Mammary epithelial cell (primary cell): ENCODE measurements at regions of chr11 and their contacts with region 1.

Region 1: DNA sequence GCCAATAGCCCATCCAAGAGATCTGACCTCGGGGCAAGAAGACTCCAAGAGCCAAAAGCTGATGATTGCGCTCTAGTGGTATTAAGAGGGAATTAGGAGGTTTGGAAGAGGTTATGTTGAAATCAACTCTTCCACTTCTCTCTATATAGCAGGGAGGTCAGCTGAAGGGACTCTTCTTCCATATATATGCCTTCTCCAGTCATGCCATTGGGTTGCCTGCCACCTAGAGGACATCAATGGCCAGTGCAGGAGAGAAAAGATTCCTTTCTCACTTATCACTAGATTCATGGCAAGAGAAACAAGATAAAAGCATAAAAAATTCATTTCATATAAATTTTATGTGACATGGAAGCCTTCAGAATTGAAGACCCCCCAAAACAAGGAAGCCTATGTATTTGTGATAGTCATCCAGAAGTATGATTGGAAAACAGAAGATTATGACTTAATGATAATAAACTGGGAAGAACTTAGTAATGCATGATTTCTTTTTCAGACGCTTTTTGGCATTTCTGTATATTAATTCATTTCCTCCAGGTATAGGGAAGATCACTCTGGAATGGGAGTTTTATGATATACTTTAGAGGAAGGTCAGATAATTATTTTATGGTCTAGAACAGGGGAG is 435.1 kb upstream of the DDI1 start:
- DNase-seq: peak; percentile 52
- H3K4me3 ChIP-seq: no peak overlapping the region
- H3K27ac ChIP-seq: no peak overlapping the region
- H3K4me1 ChIP-seq: no peaks in the 10 kb centered on the region
- H3K27me3 ChIP-seq: no peaks in the 10 kb centered on the region
- CTCF ChIP-seq: peak; percentile 96 to 99

Region 2: GRCh38 chr11:103202048-103202651 is 399.2 kb before region 1 on chr11:
- CTCF ChIA-PET with region 1: no interaction called
- dilution Hi-C with region 1: no loop called
- in situ Hi-C with region 1: no loop called
- intact Hi-C with region 1: loop called (anchors 1 kb)
- DNase-seq: peak; percentile 17
- H3K4me3 ChIP-seq: no peak overlapping the region
- H3K27ac ChIP-seq: no peak overlapping the region
- H3K4me1 ChIP-seq: no peaks in the 10 kb centered on the region
- H3K27me3 ChIP-seq: no peaks in the 10 kb centered on the region
- CTCF ChIP-seq: peak; percentile 70 to 86

Region 3: DNA sequence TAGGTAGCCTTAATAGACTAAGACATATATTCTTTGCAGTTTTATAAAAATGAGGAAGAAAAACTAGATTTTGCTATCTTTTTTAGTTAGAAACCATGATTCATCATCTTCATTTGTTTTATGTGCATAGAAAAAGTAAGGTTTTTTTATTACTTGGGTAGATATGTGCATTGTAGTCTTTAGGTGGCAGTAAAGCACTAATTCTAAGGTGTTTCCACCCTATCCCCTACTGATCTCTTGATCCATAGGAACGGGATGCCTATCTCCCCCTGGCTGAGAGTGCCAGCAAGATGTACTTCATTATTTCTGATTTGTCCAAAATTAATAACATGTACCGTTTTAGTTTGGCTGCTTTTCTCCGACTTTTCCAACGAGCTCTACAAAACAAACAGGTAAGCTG is 344.0 kb before region 1 on chr11:
- CTCF ChIA-PET with region 1: no interaction called
- dilution Hi-C with region 1: no loop called
- in situ Hi-C with region 1: no loop called
- intact Hi-C with region 1: loop called (anchors 1 kb)
- DNase-seq: no peak
- H3K4me3 ChIP-seq: no peak overlapping the region
- H3K27ac ChIP-seq: no peak overlapping the region
- H3K4me1 ChIP-seq: no peaks in the 10 kb centered on the region
- H3K27me3 ChIP-seq: no peaks in the 10 kb centered on the region
- CTCF ChIP-seq: peak; percentile 29 to 42

Region 4: GRCh38 chr11:103326070-103326794 is 275.1 kb before region 1 on chr11:
- CTCF ChIA-PET with region 1: no interaction called
- dilution Hi-C with region 1: no loop called
- in situ Hi-C with region 1: loop called (anchors 10 kb)
- intact Hi-C with region 1: loop called (anchors 1 kb)
- DNase-seq: peak; percentile 51
- H3K4me3 ChIP-seq: no peak overlapping the region
- H3K27ac ChIP-seq: no peak overlapping the region
- H3K4me1 ChIP-seq: no peaks in the 10 kb centered on the region
- H3K27me3 ChIP-seq: no peaks in the 10 kb centered on the region
- CTCF ChIP-seq: peak; percentile 79 to 89

Region 5: DNA sequence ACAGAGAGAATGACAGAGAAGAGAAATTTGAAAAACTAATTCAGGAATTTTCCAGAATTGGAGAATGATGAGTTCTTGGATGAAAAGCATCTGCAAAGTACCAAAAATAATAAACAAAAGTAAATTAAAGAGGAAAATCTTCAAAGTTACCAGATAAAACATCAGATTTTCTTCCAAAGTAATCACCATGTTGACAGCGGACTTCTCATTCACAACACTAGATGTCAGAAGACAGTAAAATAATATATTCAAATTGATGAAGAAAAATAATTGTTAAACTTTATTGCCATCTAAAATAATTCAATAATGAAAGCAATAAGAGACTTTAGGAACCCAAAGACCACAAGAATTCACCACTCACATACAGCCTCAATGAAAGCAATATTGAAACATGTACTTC is 136.9 kb before region 1 on chr11:
- CTCF ChIA-PET with region 1: no interaction called
- dilution Hi-C with region 1: no loop called
- in situ Hi-C with region 1: no loop called
- intact Hi-C with region 1: loop called (anchors 1 kb)
- DNase-seq: no peak
- H3K4me3 ChIP-seq: no peak overlapping the region
- H3K27ac ChIP-seq: no peak overlapping the region
- H3K4me1 ChIP-seq: no peaks in the 10 kb centered on the region
- H3K27me3 ChIP-seq: no peaks in the 10 kb centered on the region
- CTCF ChIP-seq: no peak

Region 6: DNA sequence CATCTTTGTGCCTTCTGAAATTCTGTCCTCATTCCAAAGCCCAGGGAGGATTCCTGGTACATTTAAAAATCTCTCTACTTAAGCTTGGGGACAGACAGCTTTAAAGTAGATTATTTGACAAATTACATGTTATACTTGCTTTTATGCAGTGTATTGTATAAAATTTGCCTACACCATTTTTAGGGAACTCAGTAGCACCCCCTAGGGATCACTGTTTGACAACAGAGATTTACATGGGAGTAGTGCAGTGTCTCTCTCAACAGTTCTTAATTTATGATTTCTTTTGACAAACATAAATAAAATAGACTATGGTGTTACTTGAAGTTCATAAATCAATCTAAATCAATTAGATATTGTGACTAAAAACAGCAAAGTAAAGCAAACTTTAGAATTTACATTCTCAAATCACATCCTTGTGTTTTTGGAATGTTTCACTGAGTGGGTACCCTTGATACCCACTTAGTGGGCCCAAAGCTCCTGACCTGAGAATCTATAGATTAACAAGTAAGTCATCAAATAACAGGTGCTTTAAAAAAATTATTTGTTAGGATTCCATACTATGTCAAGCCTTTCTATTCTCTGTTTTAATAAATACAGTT is 63.3 kb before region 1 on chr11:
- CTCF ChIA-PET with region 1: no interaction called
- dilution Hi-C with region 1: no loop called
- in situ Hi-C with region 1: no loop called
- intact Hi-C with region 1: loop called (anchors 5 kb)
- DNase-seq: peak; percentile 26
- H3K4me3 ChIP-seq: no peak overlapping the region
- H3K27ac ChIP-seq: no peak overlapping the region
- H3K4me1 ChIP-seq: peaks cover 21% of the 10 kb centered on the region
- H3K27me3 ChIP-seq: no peaks in the 10 kb centered on the region
- CTCF ChIP-seq: peak; percentile 60 to 76

Region 7: DNA sequence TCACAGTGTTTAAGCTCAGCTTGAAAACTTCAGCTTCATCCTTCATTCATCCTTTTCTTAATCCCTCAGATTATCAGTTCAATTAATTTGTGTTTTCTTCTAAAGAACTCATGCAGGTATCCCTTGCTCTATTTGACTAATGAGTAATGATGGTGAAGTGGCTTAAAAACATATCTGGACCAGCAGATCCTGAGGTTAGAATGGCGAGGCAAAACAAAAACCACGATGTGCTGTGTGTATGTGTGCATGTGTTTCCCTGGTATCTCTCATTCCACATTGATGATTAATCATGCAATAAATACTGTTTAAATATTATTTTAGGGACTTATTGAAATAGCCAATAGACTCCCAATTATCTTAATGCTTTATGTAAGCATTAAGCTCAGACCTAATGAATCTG is 55.1 kb before region 1 on chr11:
- CTCF ChIA-PET with region 1: no interaction called
- dilution Hi-C with region 1: loop called (anchors 5 kb)
- in situ Hi-C with region 1: no loop called
- intact Hi-C with region 1: no loop called
- DNase-seq: peak; percentile 68
- H3K4me3 ChIP-seq: no peak overlapping the region
- H3K27ac ChIP-seq: no peak overlapping the region
- H3K4me1 ChIP-seq: peaks cover 7% of the 10 kb centered on the region
- H3K27me3 ChIP-seq: no peaks in the 10 kb centered on the region
- CTCF ChIP-seq: no peak

Region 8: GRCh38 chr11:103851166-103851651 is 249.9 kb after region 1 on chr11:
- CTCF ChIA-PET with region 1: no interaction called
- dilution Hi-C with region 1: no loop called
- in situ Hi-C with region 1: no loop called
- intact Hi-C with region 1: no loop called
- DNase-seq: peak; percentile 0
- H3K4me3 ChIP-seq: no peak overlapping the region
- H3K27ac ChIP-seq: no peak overlapping the region
- H3K4me1 ChIP-seq: no peaks in the 10 kb centered on the region
- H3K27me3 ChIP-seq: no peaks in the 10 kb centered on the region
- CTCF ChIP-seq: no peak